K562 (cell line): ENCODE measurements at regions of chr9 and their contacts with region 1.

Region 1: GRCh38 chr9:38039090-38039906 is 29.7 kb downstream of the SHB start:
- DNase-seq: peak; percentile 53 to 79 (median 62)
- ATAC-seq: peak; percentile 66
- H3K4me3 ChIP-seq: no peak overlapping the region
- H3K27ac ChIP-seq: peak overlapping the region; percentile 89
- H3K4me1 ChIP-seq: peaks cover 55 to 58% of the 10 kb centered on the region in 2 experiments
- H3K27me3 ChIP-seq: no peaks in the 10 kb centered on the region
- CTCF ChIP-seq: peak in 1 of 3 experiments; percentile 8; a peak in 1 of 6 replicates
- EP300 ChIP-seq: no peak; the same call in 1 of the 2 replicates
- POLR2A ChIP-seq: 0 out of 2 replicates have a peak, but pooled peaks have one; percentile 39
- RAD21 ChIP-seq: 0 out of 4 replicates have a peak, but pooled peaks of 1 of the 2 experiments have one; percentile 11

Region 2: DNA sequence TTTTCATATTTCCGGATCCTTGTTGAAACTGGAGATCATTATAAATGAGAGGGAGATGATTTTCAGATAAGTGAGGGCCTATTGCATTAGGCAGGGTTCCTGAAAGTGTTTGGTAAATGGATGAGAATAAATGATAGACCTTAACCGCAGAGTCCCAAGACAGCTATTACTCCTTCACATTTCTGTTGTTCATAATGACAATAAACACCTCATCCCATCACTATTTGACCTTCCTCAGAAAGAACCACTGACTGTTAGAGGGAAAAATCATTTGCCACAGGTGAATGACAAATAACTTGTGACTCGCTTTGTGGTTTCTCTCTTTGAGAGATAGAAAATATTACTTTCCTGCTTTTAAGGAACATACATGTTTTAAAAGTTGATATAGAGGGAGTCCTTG is 333.0 kb before region 1 on chr9:
- CTCF ChIA-PET with region 1: no interaction called
- POLR2A ChIA-PET with region 1: no interaction called
- in situ Hi-C with region 1: no loop called
- intact Hi-C with region 1: no loop called
- DNase-seq: no peak
- ATAC-seq: no peak
- H3K4me3 ChIP-seq: no peak overlapping the region
- H3K27ac ChIP-seq: no peak overlapping the region
- H3K4me1 ChIP-seq: no peaks in the 10 kb centered on the region
- H3K27me3 ChIP-seq: peaks cover 36 to 40% of the 10 kb centered on the region in 2 experiments; a peak in 4 of 5 replicates
- CTCF ChIP-seq: no peak
- EP300 ChIP-seq: no peak
- POLR2A ChIP-seq: no peak
- RAD21 ChIP-seq: no peak

Region 3: GRCh38 chr9:37852222-37852621 is 187.1 kb before region 1 on chr9:
- CTCF ChIA-PET with region 1: no interaction called
- POLR2A ChIA-PET with region 1: no interaction called
- in situ Hi-C with region 1: no loop called
- intact Hi-C with region 1: no loop called
- DNase-seq: no peak
- ATAC-seq: no peak
- H3K4me3 ChIP-seq: no peak overlapping the region
- H3K27ac ChIP-seq: no peak overlapping the region
- H3K4me1 ChIP-seq: no peaks in the 10 kb centered on the region
- H3K27me3 ChIP-seq: no peaks in the 10 kb centered on the region
- CTCF ChIP-seq: no peak
- EP300 ChIP-seq: no peak
- POLR2A ChIP-seq: no peak
- RAD21 ChIP-seq: no peak

Region 4: DNA sequence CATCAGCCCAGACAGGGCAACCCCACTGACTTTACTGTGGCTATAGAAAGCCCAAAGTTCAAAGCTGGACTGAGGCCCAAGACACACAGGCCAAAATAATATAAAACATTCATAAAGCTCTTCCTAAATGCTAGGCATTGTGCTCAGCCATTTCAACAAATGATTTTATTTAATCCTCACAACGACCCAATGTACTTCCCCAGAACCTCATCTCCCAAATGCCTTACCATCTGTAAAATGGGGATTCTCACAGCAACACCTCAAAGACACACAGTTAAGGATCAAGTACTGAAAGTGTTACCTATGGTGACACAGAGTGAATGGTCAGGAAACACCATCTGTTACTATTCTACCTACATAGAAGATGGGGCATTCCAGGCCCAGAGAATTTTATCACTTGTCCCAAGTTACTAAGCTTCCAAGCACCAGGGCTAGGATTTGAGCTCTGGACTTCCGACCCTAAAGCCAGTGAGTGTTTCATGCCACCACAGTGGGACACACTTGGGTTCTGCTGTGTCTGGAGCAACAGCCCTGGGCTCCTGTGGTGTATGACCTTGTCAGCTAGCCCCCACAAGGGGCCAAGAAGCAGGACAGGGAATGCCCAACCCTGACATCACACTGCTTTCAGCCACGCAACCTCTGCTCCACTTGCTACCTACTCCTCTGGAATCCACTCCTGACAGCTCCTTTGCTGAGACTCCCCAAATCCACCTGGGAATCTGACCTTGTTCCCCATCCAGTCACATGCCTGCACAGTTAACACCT is 14.6 kb after region 1 on chr9:
- CTCF ChIA-PET with region 1: no interaction called
- POLR2A ChIA-PET with region 1: interaction called, 11 read pairs
- in situ Hi-C with region 1: no loop called
- intact Hi-C with region 1: no loop called
- DNase-seq: no peak
- ATAC-seq: no peak
- H3K4me3 ChIP-seq: no peak overlapping the region
- H3K27ac ChIP-seq: no peak overlapping the region
- H3K4me1 ChIP-seq: peaks cover 3 to 8% of the 10 kb centered on the region in 2 experiments; a peak in 4 of 5 replicates
- H3K27me3 ChIP-seq: no peaks in the 10 kb centered on the region
- CTCF ChIP-seq: no peak
- EP300 ChIP-seq: no peak
- POLR2A ChIP-seq: no peak
- RAD21 ChIP-seq: no peak